Endothelial cell of umbilical vein (primary cell): ENCODE measurements at regions of chrX and their contacts with region 1.

Region 1: GRCh38 chrX:132488819-132489577 is at the start of gene MBNL3:
- DNase-seq: peak; percentile 43
- H3K4me3 ChIP-seq: peak within 1 kb of the TSS; percentile 53 to 81 (median 55)
- H3K27ac ChIP-seq: peak within 1 kb of the TSS; percentile 50
- H3K4me1 ChIP-seq: peaks cover 3% of the 10 kb centered on the region
- H3K27me3 ChIP-seq: peaks cover 0 to 7% of the 10 kb centered on the region in 2 experiments
- CTCF ChIP-seq: no peak
- POLR2A ChIP-seq: no peak
- total RNA-seq, gene MBNL3: 4.9 and 5.6 TPM in 2 replicates

Region 2: GRCh38 chrX:131830400-131831184 is 658.4 kb before region 1 on chrX:
- CTCF ChIA-PET with region 1: no interaction called
- POLR2A ChIA-PET with region 1: no interaction called
- dilution Hi-C with region 1: no loop called
- intact Hi-C with region 1: loop called (anchors 10 kb)
- DNase-seq: peak; percentile 82
- H3K4me3 ChIP-seq: peak overlapping the region in 1 of 3 experiments; percentile 10
- H3K27ac ChIP-seq: peak overlapping the region; percentile 83
- H3K4me1 ChIP-seq: peaks cover 10% of the 10 kb centered on the region
- H3K27me3 ChIP-seq: no peaks in the 10 kb centered on the region
- CTCF ChIP-seq: peak; percentile 38 to 58
- POLR2A ChIP-seq: no peak

Region 3: DNA sequence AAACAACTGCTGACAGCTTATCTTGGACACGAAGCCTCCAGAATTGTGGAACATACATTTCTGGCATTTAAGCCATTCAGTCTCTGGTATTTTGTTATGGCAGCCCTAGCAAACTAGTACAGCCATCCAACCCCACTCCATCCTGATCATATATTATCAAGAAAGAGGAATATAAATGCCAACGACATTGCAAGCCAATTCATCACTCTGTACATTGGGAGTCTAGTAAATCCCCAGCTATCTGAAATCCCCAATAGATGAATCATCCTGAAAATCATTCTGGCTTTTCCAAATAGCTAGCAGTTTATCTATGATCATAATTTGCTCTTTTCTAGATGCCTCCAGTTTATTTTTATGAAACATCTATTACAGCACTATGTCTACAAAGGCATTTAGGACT is 402.3 kb before region 1 on chrX:
- CTCF ChIA-PET with region 1: no interaction called
- POLR2A ChIA-PET with region 1: no interaction called
- dilution Hi-C with region 1: no loop called
- intact Hi-C with region 1: loop called (anchors 10 kb)
- DNase-seq: peak; percentile 47
- H3K4me3 ChIP-seq: no peak overlapping the region
- H3K27ac ChIP-seq: peak overlapping the region; percentile 11
- H3K4me1 ChIP-seq: peaks cover 14% of the 10 kb centered on the region
- H3K27me3 ChIP-seq: no peaks in the 10 kb centered on the region
- CTCF ChIP-seq: no peak
- POLR2A ChIP-seq: no peak

Region 4: DNA sequence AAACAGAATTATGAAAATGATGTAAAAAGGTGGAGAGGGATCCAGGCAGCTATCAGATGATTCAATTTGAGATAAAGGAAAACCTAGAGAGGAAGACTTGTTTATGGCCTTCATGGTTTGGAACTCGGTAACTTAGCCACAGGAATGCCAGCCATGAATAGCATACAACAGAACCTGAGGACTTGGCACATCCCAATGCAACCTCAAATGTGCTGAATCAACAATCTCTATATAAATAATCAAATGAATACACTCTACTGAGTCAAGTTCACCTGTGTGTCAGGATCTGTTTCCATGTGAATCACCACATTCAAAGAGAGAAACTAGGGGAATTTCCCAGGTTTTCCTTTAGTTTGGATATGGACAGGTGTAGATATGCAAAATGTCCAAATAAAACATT is 87.1 kb before region 1 on chrX:
- CTCF ChIA-PET with region 1: no interaction called
- POLR2A ChIA-PET with region 1: no interaction called
- dilution Hi-C with region 1: no loop called
- intact Hi-C with region 1: no loop called
- DNase-seq: no peak
- H3K4me3 ChIP-seq: no peak overlapping the region
- H3K27ac ChIP-seq: no peak overlapping the region
- H3K4me1 ChIP-seq: no peaks in the 10 kb centered on the region
- H3K27me3 ChIP-seq: no peaks in the 10 kb centered on the region
- CTCF ChIP-seq: no peak
- POLR2A ChIP-seq: no peak